ENCODE measurements at regions of chr9 and their contacts with region 1.

Region 1: DNA sequence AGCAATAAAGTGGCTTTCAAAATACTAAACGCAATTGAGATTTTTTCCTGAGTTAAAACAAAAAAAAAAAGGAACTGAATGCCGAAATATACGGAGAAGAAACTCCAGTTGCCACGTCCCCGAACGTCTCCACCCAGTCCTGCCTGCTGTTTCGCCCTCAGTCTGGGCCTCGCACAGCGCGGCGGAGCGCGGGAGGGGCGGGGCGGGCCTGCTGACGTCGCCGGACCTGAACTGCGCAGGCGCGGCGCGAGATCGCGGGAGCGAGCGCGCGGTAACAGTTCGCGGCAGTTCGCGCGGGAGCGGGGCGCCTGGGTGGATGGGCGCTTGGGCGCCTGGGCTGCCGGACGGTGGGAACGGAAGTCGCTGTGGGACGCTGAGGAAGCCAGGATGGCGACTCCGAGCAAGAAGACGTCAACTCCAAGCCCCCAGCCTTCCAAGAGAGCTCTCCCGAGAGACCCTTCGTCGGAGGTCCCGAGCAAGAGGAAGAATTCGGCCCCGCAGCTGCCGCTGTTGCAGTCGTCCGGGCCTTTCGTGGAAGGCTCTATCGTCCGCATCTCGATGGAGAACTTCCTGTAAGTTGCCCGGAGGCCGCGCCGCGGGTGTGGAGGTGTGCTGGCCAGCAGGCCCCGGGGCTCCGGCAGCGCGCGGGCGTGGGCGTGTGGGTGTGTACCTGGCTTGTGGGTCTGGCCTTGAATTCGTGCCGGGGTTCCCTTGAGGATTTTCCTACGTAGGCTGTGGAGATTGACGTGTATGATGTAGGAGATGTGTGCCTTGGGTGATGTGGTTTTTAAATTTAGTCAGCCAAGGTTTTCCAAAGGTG is at the start of gene SMC5:
- DNase-seq: peak; percentile 75 to 85
- ATAC-seq: peak; percentile 90 to 91
- H3K4me3 ChIP-seq: peak within 1 kb of the TSS; percentile 66 to 97 (median 90)
- H3K27ac ChIP-seq: peak within 1 kb of the TSS; percentile 87 to 95 (median 94)
- H3K4me1 ChIP-seq: peaks cover 39 to 43% of the 10 kb centered on the region in 2 donors
- H3K27me3 ChIP-seq: no peaks in the 10 kb centered on the region
- CTCF ChIP-seq: no peak
- POLR2A ChIP-seq: peak; percentile 96
- total RNA-seq, gene SMC5: 16.2 to 250 (median 20.5) TPM

Region 2: GRCh38 chr9:69759421-69760277 is 499.3 kb before region 1 on chr9 and contains the start of gene PTAR1:
- in situ Hi-C with region 1: loop called in 1 of 4 experiments (anchors 25 kb)
- intact Hi-C with region 1: loop called (anchors 5 kb)
- DNase-seq: peak; percentile 78 to 86
- ATAC-seq: peak; percentile 92 to 94
- H3K4me3 ChIP-seq: peak within 1 kb of the TSS; percentile 75 to 87 (median 77)
- H3K27ac ChIP-seq: peak within 1 kb of the TSS; percentile 92 to 98 (median 94)
- H3K4me1 ChIP-seq: peaks cover 30 to 39% of the 10 kb centered on the region in 2 donors
- H3K27me3 ChIP-seq: no peaks in the 10 kb centered on the region
- CTCF ChIP-seq: peak in 1 of 5 experiments; percentile 31
- POLR2A ChIP-seq: peak; percentile 74 to 79
- total RNA-seq, gene PTAR1: 26.5 to 52.4 (median 40.6) TPM

Region 3: GRCh38 chr9:69951411-69951810 is 307.5 kb before region 1 on chr9:
- in situ Hi-C with region 1: no loop called
- intact Hi-C with region 1: no loop called
- DNase-seq: no peak
- ATAC-seq: no peak
- H3K4me3 ChIP-seq: no peak overlapping the region
- H3K27ac ChIP-seq: no peak overlapping the region
- H3K4me1 ChIP-seq: no peaks in the 10 kb centered on the region
- H3K27me3 ChIP-seq: no peaks in the 10 kb centered on the region
- CTCF ChIP-seq: no peak
- POLR2A ChIP-seq: no peak

Region 4: GRCh38 chr9:70303268-70303667 is 44.4 kb after region 1 on chr9:
- in situ Hi-C with region 1: no loop called
- intact Hi-C with region 1: no loop called
- DNase-seq: no peak
- ATAC-seq: no peak
- H3K4me3 ChIP-seq: no peak overlapping the region
- H3K27ac ChIP-seq: no peak overlapping the region
- H3K4me1 ChIP-seq: no peaks in the 10 kb centered on the region
- H3K27me3 ChIP-seq: no peaks in the 10 kb centered on the region
- CTCF ChIP-seq: no peak
- POLR2A ChIP-seq: no peak

Region 5: GRCh38 chr9:70413798-70414775 is 155.2 kb after region 1 on chr9 and contains the start of gene KLF9:
- in situ Hi-C with region 1: no loop called
- intact Hi-C with region 1: loop called (anchors 10 kb)
- DNase-seq: peak; percentile 98 to 99
- ATAC-seq: peak; percentile 57 to 61
- H3K4me3 ChIP-seq: peak within 1 kb of the TSS; percentile 76 to 99 (median 96)
- H3K27ac ChIP-seq: peak within 1 kb of the TSS; percentile 92 to 100 (median 100)
- H3K4me1 ChIP-seq: peaks cover 46 to 52% of the 10 kb centered on the region in 2 donors
- H3K27me3 ChIP-seq: no peaks in the 10 kb centered on the region
- CTCF ChIP-seq: no peak
- POLR2A ChIP-seq: no peak
- total RNA-seq, gene KLF9: 122 to 174 (median 169) TPM

Region 6: GRCh38 chr9:70504834-70505233 is 245.9 kb after region 1 on chr9:
- in situ Hi-C with region 1: no loop called
- intact Hi-C with region 1: loop called (anchors 5 kb)
- DNase-seq: no peak
- ATAC-seq: no peak
- H3K4me3 ChIP-seq: no peak overlapping the region
- H3K27ac ChIP-seq: peak overlapping the region in 3 of 4 donors; percentile 6 to 57 (median 51)
- H3K4me1 ChIP-seq: peaks cover 21 to 35% of the 10 kb centered on the region in 2 donors
- H3K27me3 ChIP-seq: no peaks in the 10 kb centered on the region
- CTCF ChIP-seq: no peak
- POLR2A ChIP-seq: no peak

Region 7: DNA sequence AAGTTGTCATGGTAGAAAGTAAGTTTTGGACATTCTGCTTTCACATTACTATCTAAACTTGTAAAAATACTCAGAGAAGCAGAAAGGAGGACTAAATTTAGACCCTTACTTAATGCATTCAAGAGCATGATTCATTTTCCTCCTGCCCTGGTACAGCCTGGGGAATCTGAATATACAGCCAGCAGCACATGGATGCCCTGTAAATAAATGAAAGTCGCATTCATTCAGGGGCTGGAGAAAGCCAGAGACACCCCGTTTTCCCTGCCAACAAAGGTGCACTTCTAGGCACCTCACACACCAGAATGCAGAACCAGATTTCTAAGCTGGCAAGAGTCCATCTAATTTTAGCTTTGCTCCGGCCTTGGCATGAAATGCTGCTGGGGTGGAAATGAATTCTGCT is 328.3 kb after region 1 on chr9:
- in situ Hi-C with region 1: loop called in 1 of 4 experiments (anchors 10 kb)
- intact Hi-C with region 1: no loop called
- DNase-seq: peak; percentile 47 to 53
- ATAC-seq: peak; percentile 92 to 94
- H3K4me3 ChIP-seq: no peak overlapping the region
- H3K27ac ChIP-seq: peak overlapping the region; percentile 82 to 89 (median 84)
- H3K4me1 ChIP-seq: peaks cover 37 to 46% of the 10 kb centered on the region in 2 donors
- H3K27me3 ChIP-seq: no peaks in the 10 kb centered on the region
- CTCF ChIP-seq: no peak
- POLR2A ChIP-seq: no peak

Region 8: DNA sequence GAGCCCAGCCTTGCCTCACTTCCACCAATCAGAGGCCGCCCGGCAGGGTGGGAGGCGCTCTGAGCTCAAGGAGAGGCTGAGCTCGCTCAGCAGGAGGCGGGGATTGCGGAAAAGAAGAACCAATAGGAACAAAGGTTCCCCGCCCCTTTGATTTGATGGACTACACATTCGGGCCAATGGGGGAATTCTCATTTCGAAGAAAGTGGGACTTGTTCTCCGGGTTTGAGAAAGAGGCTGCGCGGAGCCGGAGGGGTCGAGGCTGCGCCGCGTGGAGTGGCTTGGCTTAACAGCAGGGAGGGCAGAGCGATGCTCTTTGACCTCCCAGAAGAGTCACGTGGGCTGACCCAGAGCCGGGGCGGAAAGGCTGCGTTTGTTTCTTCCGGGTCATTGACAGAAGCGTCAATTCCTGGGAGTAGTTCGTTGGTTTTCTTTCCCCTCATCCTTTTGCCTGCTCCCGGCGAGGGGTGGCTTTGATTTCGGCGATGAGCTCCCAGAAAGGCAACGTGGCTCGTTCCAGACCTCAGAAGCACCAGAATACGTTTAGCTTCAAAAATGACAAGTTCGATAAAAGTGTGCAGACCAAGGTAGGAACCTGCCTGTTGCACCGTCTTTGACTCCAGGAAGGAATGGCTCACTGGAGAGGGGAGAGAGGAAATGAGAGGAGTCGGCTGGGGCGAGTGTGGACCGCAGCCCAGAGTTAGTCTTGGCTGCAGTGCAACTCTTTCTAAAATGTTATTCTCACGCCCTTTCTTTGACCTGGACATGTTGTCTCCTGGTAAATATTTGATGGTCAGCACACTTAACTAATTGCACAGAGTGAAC is 1652.6 kb after region 1 on chr9 and contains the start of gene C9orf85:
- in situ Hi-C with region 1: no loop called
- intact Hi-C with region 1: loop called (anchors 2 kb)
- DNase-seq: peak; percentile 99
- ATAC-seq: peak; percentile 91 to 96
- H3K4me3 ChIP-seq: peak within 1 kb of the TSS; percentile 73 to 96 (median 87)
- H3K27ac ChIP-seq: peak within 1 kb of the TSS; percentile 88 to 96 (median 92)
- H3K4me1 ChIP-seq: peaks cover 43 to 58% of the 10 kb centered on the region in 2 donors
- H3K27me3 ChIP-seq: no peaks in the 10 kb centered on the region
- CTCF ChIP-seq: no peak
- POLR2A ChIP-seq: peak in 1 of 2 donors; percentile 69
- total RNA-seq, gene C9orf85: 1.7 to 9.6 (median 6.3) TPM

Measured in gastrocnemius medialis (tissue), 4 donors.